ENCODE measurements at regions of chr14 and their contacts with region 1.

Region 1: GRCh38 chr14:95468448-95469145 is 47.9 kb downstream of the SYNE3 start:
- DNase-seq: no peak
- ATAC-seq: no peak
- H3K4me3 ChIP-seq: no peak overlapping the region
- H3K27ac ChIP-seq: no peak overlapping the region
- H3K4me1 ChIP-seq: no peaks in the 10 kb centered on the region
- H3K27me3 ChIP-seq: no peaks in the 10 kb centered on the region
- CTCF ChIP-seq: no peak
- POLR2A ChIP-seq: no peak

Region 2: DNA sequence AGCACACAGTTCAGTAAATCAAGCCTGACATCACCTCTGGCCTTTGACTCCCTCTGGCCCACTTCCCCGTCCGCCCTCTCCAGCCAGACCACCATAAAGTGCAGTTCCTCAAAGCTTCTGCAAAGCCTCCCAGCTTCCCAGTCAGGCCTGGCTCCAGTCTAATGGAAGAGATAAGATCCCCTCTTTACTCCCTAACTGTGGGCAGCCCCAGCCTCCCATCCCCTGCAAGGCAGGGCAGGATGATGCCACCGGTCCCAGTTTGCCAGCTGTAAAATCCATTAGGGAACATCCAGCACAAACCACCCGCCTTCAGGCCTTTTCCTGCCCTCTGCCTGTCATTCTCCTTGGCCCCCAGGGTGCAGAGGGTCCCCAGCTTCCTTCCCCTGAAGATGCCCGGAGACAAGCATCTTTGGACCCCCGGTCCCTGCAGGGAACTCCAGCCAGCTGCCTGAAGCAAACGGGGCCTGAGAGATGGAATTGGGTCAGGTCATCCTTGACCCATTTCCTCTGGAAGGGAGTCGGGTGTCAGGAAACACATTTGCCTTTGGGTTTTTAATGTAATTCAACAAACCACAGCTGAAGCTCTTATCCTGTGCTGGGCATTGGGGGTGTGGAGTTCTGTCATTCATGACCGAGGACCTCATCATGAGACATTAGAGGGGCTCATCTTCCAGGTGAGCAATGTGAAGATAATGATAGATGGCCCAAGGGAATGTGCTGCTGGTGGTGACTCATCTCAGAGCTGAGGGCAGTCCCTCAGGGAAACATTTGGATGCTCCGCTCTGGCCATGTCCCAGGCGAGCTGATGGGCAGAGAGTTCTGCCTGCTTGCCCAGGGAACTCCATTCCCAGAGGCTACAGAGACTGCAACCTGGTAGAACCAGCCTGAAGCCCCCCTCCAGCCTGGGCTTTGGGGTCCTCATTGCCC is 55.0 kb before region 1 on chr14:
- intact Hi-C with region 1: no loop called
- DNase-seq: no peak
- ATAC-seq: no peak
- H3K4me3 ChIP-seq: no peak overlapping the region
- H3K27ac ChIP-seq: no peak overlapping the region
- H3K4me1 ChIP-seq: no peaks in the 10 kb centered on the region
- H3K27me3 ChIP-seq: no peaks in the 10 kb centered on the region
- CTCF ChIP-seq: no peak
- POLR2A ChIP-seq: no peak

Region 3: DNA sequence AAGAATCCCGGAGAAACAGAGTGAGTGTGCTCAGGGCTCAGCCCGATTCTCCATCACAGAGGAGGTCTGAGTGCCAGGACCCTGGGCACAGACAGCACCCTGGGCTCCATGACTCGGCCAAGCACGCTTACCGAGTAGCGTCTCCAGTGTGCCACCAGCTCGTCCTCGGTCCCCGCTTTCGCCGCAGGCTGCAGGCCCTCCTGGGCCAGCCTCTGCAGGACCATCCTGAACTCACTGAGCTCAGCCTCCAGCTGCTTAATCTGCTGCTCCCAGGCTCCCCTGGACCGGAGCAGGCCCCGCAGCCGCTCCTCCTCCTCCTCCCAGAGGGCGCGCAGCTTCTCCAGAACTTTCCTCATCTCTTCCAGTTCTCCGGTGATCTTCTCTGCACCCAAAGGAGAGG is 13.4 kb before region 1 on chr14:
- intact Hi-C with region 1: loop called (anchors 2 kb)
- DNase-seq: no peak
- ATAC-seq: no peak
- H3K4me3 ChIP-seq: no peak overlapping the region
- H3K27ac ChIP-seq: no peak overlapping the region
- H3K4me1 ChIP-seq: peaks cover 8% of the 10 kb centered on the region
- H3K27me3 ChIP-seq: no peaks in the 10 kb centered on the region
- CTCF ChIP-seq: no peak
- POLR2A ChIP-seq: no peak

Region 4: DNA sequence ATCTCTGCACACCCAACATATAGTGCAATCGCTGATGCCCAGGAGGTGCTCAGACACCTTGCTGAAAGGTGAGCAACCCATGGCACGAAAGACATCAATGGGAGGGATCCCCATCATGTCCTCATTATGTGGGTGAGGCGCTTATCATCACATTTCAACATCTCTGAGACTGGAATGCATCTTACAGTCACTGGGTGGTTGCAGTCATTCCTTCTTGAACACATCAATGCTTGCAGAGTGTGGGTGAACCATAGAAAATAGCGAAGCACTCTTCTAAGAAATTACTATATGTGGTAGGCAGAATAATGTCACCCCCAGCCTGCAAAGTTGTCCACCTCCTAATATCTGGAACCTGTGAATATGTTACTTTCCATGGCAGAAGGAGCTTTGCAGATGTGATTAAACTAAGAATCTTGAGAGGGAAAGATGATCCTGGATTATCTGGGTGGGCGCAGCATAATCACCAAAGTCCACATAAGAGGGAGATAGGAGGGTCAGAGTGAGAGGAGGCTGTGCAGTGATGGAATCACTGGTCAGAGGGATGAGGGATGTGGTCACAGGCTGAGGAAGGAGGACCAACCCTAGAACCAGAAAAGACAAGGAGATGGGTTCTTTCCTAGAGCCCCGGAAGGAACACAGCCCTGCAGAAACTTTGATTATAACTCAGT is 117.5 kb after region 1 on chr14:
- intact Hi-C with region 1: no loop called
- DNase-seq: no peak
- ATAC-seq: no peak
- H3K4me3 ChIP-seq: no peak overlapping the region
- H3K27ac ChIP-seq: no peak overlapping the region
- H3K4me1 ChIP-seq: no peaks in the 10 kb centered on the region
- H3K27me3 ChIP-seq: peaks cover 0 to 3% of the 10 kb centered on the region in 2 donors
- CTCF ChIP-seq: no peak
- POLR2A ChIP-seq: no peak

Measured in body of pancreas (tissue), 4 donors.